ENCODE measurements at regions of chr6 and their contacts with region 1.

Region 1: DNA sequence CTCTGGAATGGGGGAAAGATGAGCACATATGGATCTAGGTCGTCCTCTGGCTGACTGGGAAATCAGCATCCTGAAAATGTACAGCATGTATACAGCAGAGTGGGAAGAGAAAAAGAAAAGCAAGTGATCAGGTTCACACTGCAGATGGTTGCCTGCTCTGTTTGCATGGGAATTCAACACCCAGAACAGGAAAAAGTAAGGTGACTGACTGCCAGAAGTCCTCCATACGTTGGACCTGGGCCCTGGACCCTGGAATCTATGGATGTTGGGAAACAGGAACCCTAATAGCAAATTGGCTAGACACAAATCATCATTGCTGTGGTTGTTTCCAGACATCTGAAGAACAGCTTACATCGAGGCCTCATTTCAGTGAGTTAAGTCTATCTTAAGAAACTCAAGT is 30.3 kb upstream of the TNFAIP3 start:
- DNase-seq: no peak
- ATAC-seq: no peak
- H3K4me3 ChIP-seq: no peak overlapping the region
- H3K4me3 Mint-ChIP-seq: no peak overlapping the region
- H3K27ac ChIP-seq: no peak overlapping the region
- H3K27ac Mint-ChIP-seq: peak overlapping the region in 5 of 9 donors; percentile 1 to 30 (median 5)
- H3K4me1 ChIP-seq: no peaks in the 10 kb centered on the region
- H3K4me1 Mint-ChIP-seq: peaks cover 0 to 11% (median 0%) of the 10 kb centered on the region in 7 donors
- H3K27me3 ChIP-seq: no peaks in the 10 kb centered on the region
- H3K27me3 Mint-ChIP-seq: no peaks in the 10 kb centered on the region

Region 2: DNA sequence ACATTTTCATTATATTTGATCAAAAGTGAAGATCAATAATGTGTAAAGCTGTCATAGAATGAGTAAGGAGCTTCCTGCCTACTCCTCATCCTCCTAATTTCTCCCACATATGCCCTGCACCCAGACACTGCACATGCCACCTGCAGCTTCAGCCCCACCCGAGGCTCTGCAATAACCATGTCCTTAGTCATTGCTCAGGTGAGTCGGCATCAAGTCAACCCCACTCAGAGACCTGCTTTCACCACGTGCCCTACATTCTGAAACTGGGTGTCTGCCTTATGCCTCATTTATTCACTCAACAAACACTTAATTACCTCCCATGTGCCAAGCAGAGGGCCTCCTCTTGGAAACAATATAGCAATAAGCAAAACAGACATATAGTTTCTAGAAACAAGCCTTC is 14.9 kb after region 1 on chr6:
- CTCF ChIA-PET with region 1: interaction called, 3 read pairs
- POLR2A ChIA-PET with region 1: no interaction called
- intact Hi-C with region 1: loop called (anchors 2 kb)
- DNase-seq: no peak
- ATAC-seq: no peak
- H3K4me3 ChIP-seq: no peak overlapping the region
- H3K4me3 Mint-ChIP-seq: no peak overlapping the region
- H3K27ac ChIP-seq: no peak overlapping the region
- H3K27ac Mint-ChIP-seq: peak overlapping the region in 1 of 9 donors; percentile 4
- H3K4me1 ChIP-seq: no peaks in the 10 kb centered on the region
- H3K4me1 Mint-ChIP-seq: peaks cover 0 to 17% (median 0%) of the 10 kb centered on the region in 7 donors
- H3K27me3 ChIP-seq: no peaks in the 10 kb centered on the region
- H3K27me3 Mint-ChIP-seq: no peaks in the 10 kb centered on the region

Region 3: GRCh38 chr6:137944793-137945498 is 108.2 kb after region 1 on chr6:
- CTCF ChIA-PET with region 1: no interaction called
- POLR2A ChIA-PET with region 1: no interaction called
- intact Hi-C with region 1: no loop called
- DNase-seq: peak in 6 of 9 donors; percentile 7 to 52 (median 39)
- ATAC-seq: peak; percentile 88
- H3K4me3 ChIP-seq: no peak overlapping the region
- H3K4me3 Mint-ChIP-seq: no peak overlapping the region
- H3K27ac ChIP-seq: no peak overlapping the region
- H3K27ac Mint-ChIP-seq: peak overlapping the region in 3 of 9 donors; percentile 45 to 76 (median 59)
- H3K4me1 ChIP-seq: peaks cover 1 to 7% of the 10 kb centered on the region in 2 donors
- H3K4me1 Mint-ChIP-seq: peaks cover 4 to 48% (median 18%) of the 10 kb centered on the region in 7 donors
- H3K27me3 ChIP-seq: no peaks in the 10 kb centered on the region
- H3K27me3 Mint-ChIP-seq: no peaks in the 10 kb centered on the region